Activated T-helper 1 cell treated with anti-CD3 and anti-CD28 coated beads, Interleukin-12 subunit alpha, Interleukin-12 subunit beta, Interleukin-2, Interleukin-4 antibody, amounts not matched to agents 30 ng/mL and 10 ng/mL and 1 ng/mL, durations not matched to agents 14 hours and 24 hours and 36 hours (primary cell): ENCODE measurements at regions of chr5 and their contacts with region 1.

Region 1: DNA sequence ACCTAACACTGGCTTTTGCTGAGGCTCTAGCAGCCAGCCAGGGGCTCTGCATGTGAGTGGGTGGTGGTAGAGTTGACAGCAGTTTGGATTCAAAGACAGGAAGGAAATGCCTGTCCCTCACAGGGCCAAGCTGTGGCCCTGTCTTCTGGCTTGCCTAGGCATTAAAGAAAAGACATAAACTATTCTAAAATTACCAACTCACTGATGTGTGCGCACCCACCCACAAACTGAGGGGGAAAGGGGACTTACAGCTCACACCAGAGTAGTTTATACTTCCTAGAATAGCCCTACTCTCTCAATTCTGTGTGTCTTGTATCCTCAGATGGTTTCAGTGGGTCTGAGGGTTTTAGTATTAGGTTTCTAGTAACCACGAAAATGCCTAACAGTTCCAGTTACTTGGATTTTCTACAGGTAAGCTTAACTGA is 18.3 kb upstream of the IL13 start:
- DNase-seq: no peak
- H3K4me3 Mint-ChIP-seq: peak overlapping the region; percentile 30
- H3K27ac Mint-ChIP-seq: peak overlapping the region; percentile 86
- H3K4me1 Mint-ChIP-seq: peaks cover 83% of the 10 kb centered on the region
- H3K27me3 Mint-ChIP-seq: no peaks in the 10 kb centered on the region

Region 2: DNA sequence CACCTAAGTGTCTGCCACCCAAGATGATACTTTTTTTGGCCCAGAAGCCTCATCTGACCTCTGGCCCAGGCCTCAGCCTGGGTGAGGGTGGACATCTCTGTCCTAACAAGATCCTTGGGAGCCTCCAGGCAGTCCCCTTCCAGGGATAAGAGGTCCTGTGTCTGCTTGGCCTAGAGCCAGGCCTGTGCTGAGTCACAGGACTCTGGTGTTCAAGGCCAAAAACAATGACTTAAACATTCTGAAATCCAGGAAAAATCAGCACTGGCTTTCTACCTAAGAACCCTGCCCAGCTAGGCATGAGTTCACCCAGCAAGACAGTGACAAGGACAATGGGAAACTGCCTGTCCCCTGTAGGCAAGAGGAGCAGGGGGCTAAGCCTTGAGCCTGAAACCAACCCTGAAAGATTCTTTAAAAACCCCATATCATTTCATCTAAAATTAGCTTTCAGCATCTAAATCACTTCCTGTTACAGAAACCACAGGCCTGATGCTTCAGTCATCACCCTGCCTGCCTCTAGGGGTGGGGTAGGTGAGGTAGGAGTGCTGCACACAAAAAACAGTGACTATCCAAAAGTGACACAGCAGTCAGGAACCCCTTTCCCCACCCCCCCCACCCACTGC is 536.3 kb before region 1 on chr5:
- intact Hi-C with region 1: loop called (anchors 5 kb)
- DNase-seq: peak; percentile 78
- H3K4me3 Mint-ChIP-seq: peak overlapping the region; percentile 70
- H3K27ac Mint-ChIP-seq: peak overlapping the region; percentile 100
- H3K4me1 Mint-ChIP-seq: peaks cover 91% of the 10 kb centered on the region
- H3K27me3 Mint-ChIP-seq: no peaks in the 10 kb centered on the region

Region 3: DNA sequence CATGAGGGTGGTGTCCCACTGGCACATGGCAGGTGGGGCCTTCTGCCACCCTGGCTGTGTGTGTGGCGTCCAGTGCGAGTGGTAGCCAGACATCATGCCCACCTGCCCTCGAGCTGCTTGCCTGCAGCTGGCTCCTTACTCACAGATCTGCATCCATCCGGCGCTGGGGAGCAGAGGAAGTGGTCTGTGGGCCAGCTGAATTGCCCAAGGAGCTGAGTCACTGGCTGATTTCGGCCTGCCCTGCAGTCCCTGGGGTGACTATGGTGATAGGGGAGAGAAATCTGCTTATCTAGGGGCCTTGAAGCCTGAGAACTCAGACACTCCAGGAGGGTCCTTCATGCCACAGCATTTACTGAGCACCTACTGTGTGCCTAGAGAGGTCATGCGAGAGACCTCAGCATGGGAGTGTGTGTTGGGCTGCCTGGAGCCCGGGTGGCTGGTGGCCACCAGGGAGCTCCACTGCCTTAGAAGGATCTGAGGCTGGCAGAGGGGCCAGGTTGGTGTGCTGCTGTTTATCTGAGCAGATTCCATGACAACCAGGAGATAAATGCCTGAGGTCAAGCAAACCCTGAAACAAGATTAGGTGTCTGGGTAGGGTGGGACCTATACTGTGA is 213.1 kb before region 1 on chr5:
- intact Hi-C with region 1: loop called (anchors 5 kb)
- DNase-seq: peak; percentile 67
- H3K4me3 Mint-ChIP-seq: peak overlapping the region; percentile 72
- H3K27ac Mint-ChIP-seq: peak overlapping the region; percentile 98
- H3K4me1 Mint-ChIP-seq: peaks cover 97% of the 10 kb centered on the region
- H3K27me3 Mint-ChIP-seq: no peaks in the 10 kb centered on the region

Region 4: GRCh38 chr5:132576123-132576522 is 63.6 kb before region 1 on chr5:
- intact Hi-C with region 1: loop called (anchors 2 kb)
- DNase-seq: no peak
- H3K4me3 Mint-ChIP-seq: no peak overlapping the region
- H3K27ac Mint-ChIP-seq: peak overlapping the region; percentile 53
- H3K4me1 Mint-ChIP-seq: peaks cover 13% of the 10 kb centered on the region
- H3K27me3 Mint-ChIP-seq: no peaks in the 10 kb centered on the region

Region 5: DNA sequence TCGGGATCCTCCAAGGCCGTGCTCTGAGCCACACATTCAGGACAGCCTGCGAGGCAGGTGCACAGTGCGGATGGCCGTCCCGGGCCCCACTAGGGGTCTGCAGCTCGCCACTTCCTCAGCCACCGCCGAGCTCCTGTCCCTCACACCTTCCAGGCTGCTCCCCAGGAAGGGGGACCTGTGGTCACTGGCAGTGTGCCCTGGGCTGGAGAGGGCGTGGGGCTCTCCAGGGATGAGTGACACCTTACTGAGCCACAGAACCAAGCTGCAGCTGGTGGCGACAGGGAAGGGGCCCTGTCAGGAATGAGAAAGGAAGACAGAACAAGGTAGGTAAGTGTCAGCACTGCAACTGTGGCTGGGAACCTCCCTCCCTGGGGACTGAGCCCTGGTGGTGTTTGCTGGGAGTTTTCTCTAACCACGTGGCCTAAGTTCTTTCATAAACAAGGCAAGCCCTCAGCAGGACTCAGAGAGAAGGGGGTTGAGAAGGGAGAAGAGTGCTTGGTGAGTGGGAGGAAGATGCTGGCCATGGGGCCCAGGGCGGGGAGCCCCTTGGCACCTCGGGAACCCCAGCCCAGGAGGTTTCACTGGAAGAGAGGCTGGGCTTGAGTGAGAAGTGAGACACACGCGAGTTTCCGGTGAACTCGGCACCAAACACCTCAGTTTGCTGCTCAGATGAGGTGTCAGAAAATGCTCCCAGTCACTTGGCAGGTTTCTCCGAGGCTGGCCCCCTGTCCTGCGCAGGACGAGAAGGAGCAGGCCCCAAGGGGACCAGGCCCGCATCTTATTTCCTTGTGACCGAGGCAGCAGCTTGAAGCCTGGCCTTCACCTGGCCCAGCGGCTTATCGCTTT is 23.4 kb after region 1 on chr5:
- intact Hi-C with region 1: loop called (anchors 1 kb)
- DNase-seq: peak; percentile 43
- H3K4me3 Mint-ChIP-seq: peak overlapping the region; percentile 60
- H3K27ac Mint-ChIP-seq: peak overlapping the region; percentile 94
- H3K4me1 Mint-ChIP-seq: peaks cover 84% of the 10 kb centered on the region
- H3K27me3 Mint-ChIP-seq: no peaks in the 10 kb centered on the region

Region 6: DNA sequence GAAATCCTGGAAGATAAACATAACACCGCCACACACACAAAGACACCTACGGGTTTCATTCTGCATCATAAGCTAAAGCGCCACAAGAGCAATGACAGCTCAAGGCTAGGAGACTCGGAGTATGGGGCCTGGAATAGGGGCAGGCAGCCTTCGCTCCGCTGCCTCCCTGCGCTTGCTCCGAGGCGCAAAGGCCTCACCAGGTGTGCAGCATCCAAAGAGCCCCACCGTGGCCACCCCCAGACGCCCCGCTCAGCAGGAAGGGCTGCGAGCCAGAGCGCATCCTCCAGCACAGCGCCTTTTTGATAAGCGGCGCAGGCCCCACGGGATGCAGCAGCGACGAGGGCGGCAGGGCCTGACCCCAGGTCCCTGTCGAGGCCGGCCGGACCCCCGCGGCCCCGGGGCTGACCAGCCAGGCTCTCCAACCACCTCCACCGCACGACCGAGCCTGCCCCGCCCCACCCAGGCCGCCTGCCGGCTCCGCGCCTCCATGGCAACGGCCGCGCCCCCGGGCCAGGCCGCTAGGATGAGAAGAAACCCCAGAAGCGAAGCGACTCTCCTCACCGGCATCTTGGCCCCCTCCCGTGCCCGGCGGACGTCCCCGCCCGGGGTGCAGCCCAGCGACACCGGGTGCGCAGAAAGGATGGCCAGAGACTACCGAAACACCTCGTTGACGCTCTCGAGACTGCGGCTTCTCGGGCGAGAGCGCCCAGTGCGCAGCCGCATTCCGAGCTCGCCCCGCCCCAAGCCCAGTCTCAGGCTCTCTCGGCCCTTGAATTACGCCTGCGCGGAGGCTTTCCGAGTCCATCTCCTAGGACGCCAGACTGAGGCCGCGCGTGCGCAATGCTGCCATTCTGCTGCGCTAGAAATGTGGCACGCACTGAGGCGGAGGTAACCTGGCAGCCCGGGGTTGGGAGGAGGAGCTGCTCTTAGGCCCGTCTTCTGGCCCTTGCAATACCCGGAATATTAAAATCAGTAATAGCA is 97.4 kb after region 1 on chr5 and contains the start of gene KIF3A:
- intact Hi-C with region 1: loop called (anchors 1 kb)
- DNase-seq: peak; percentile 98
- H3K4me3 Mint-ChIP-seq: peak within 1 kb of the TSS; percentile 87
- H3K27ac Mint-ChIP-seq: peak within 1 kb of the TSS; percentile 93
- H3K4me1 Mint-ChIP-seq: peaks cover 55% of the 10 kb centered on the region
- H3K27me3 Mint-ChIP-seq: peaks cover 10% of the 10 kb centered on the region
- total RNA-seq, gene KIF3A: 58.5 and 66.9 TPM in 2 replicates